Calu3 (cell line): ENCODE measurements at regions of chr20 and their contacts with region 1.

Region 1: DNA sequence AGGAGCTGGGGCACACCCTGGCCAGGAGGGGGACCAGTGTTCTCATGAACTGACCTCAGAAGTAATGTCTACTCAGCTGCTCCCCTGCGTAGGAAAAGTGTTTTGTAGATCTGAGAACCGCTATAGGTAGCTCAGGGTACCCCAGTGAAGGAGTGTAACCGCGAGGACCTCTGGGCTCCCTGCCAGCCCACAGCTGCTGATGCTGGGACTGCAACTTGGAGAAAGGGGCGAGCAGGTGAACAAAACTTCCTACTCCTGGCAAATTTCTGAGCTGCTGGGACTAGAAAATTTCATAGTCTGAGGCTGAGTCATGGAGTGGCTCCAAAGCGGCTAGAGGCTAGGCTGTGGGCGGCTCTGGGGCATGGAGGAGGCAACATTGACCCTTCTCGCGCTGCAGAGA is 51.9 kb downstream of the PYGB start:
- DNase-seq: no peak
- H3K4me3 Mint-ChIP-seq: no peak overlapping the region
- H3K27ac Mint-ChIP-seq: no peak overlapping the region
- H3K4me1 Mint-ChIP-seq: no peaks in the 10 kb centered on the region
- H3K27me3 Mint-ChIP-seq: no peaks in the 10 kb centered on the region
- CTCF ChIP-seq: no peak

Region 2: GRCh38 chr20:25324412-25324811 is 24.6 kb after region 1 on chr20:
- CTCF ChIA-PET with region 1: interaction called, 10 read pairs
- intact Hi-C with region 1: no loop called
- DNase-seq: no peak
- H3K4me3 Mint-ChIP-seq: no peak overlapping the region
- H3K27ac Mint-ChIP-seq: no peak overlapping the region
- H3K4me1 Mint-ChIP-seq: no peaks in the 10 kb centered on the region
- H3K27me3 Mint-ChIP-seq: no peaks in the 10 kb centered on the region
- CTCF ChIP-seq: no peak

Region 3: DNA sequence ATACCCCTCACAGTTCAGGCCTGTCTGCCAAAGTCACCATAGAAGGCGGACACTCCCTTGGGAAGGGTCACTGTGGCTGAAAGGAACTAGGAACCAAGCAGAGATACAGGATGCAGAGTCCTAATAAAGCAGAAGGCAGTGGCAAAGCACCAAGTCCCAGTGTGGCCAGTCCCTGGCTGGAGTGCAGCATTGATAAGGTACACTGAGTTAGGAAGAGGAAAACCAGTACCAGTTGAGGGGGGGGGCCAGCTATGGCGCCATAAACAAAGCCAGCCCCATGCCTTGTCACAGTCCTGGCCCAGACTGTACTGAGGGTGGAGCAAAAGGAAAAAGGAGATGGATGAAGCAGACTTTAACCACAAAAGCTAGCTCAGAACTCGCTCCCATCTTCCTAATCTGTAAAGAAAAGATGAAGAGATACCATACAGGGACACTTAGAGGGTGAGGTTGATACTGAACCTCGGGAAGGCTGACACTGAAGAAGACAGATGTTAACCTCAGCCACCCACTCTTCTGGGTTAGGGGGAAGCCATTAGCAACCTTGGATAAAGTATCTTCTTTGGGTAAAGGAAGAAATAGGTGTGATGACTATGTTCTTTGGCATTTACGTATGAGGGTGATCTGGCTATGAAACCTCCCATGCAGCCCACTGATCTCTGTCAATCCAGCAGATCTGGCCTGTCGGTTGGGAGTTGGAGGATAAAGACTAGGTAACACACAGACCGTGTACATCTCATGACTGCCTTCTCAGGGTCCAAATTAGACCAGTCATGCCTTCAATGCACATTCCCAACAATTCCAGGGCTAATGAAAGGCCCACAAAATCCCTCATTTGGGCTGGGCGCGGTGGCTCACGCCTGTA is 83.1 kb after region 1 on chr20:
- CTCF ChIA-PET with region 1: no interaction called
- intact Hi-C with region 1: no loop called
- DNase-seq: no peak
- H3K4me3 Mint-ChIP-seq: no peak overlapping the region
- H3K27ac Mint-ChIP-seq: no peak overlapping the region
- H3K4me1 Mint-ChIP-seq: no peaks in the 10 kb centered on the region
- H3K27me3 Mint-ChIP-seq: no peaks in the 10 kb centered on the region
- CTCF ChIP-seq: no peak